Activated CD4-positive, alpha-beta T cell treated with anti-CD3 and anti-CD28 coated beads, Interleukin-2, amount 10 ng/mL, durations not matched to agents 24 days and 14 days (primary cell): ENCODE measurements at regions of chr17 and their contacts with region 1.

Region 1: DNA sequence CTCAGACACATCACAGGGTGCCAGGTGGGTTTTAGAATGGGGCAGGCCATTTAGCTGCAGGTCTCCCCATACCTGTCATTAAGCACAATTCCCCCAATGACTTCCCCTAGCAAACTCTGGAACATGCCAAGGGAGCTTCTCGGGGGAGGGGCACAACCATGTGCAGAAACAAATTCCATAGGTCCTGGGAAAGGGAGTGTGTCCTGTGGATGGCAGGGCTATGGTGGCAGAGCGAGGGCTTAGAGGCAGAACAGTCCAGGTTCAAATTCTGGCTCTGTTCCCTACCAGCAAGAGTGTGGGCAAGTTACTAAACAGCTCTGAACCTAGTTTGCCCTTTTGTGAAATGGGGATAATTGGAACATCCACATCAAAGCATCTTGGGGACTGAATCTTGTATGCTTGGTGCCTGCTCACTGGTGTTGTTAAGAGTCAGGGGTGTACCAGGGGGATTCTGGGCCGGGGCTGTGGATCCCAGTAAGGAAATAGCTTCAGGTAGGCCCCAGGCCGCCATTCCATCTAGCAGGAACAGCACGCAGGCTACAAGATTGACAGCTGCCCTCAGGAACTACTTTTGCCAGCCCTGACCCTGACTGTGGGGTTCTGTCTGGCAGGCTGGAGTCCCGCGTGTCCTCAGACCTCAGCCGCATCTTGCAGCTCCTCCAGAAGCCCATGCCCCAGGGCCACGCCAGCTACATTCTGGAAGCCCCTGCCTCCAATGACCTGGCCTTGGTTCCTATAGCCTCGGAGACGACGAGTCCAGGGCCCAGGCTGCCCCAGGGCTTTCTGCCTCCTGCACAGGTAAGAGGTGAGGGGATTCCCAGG is 5.6 kb upstream of the DCAF7 start:
- DNase-seq: no peak
- H3K4me3 Mint-ChIP-seq: no peak overlapping the region
- H3K27ac Mint-ChIP-seq: no peak overlapping the region
- H3K4me1 Mint-ChIP-seq: peaks cover 3% of the 10 kb centered on the region
- H3K27me3 Mint-ChIP-seq: peaks cover 6% of the 10 kb centered on the region

Region 2: DNA sequence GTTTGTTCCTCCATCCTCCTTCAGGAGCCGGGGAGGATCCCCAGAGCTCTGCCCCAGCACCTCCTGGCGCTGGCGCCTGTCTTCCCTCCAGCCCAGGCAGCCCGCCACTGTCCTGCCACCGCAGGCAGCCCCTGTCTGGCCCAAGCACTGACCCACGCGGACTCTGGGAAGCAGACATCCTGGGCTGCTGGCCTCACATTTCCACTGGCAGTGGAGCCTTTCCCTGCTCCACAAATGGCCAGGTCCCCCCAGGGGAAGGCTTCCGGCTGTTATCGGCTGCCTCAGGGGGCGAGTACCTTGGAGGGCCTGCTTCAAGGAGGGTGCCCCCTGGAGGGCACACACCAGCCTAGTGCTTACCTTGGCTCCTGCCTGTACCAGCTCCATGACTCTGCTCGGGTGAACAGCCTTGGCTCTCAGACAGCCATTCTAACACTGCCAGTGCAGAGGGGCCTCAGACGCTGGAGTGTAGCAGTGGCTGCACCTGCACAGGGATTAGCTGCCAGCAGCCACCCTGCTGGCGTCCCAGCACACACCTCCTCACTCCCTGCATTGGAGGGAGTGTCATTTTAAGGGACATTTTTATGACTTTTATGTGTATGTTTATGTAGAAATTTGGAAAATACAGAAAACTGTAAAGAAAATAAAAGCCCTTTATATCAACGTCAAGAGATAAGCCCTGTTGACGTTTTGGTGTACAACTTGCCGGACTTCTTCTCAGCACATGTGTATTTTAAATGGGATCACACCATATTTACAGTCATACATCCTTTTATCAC is 46.8 kb before region 1 on chr17:
- intact Hi-C with region 1: loop called (anchors 1 kb)
- DNase-seq: no peak
- H3K4me3 Mint-ChIP-seq: no peak overlapping the region
- H3K27ac Mint-ChIP-seq: no peak overlapping the region
- H3K4me1 Mint-ChIP-seq: peaks cover 4% of the 10 kb centered on the region
- H3K27me3 Mint-ChIP-seq: peaks cover 18% of the 10 kb centered on the region

Region 3: GRCh38 chr17:63516910-63517824 is 27.5 kb before region 1 on chr17:
- intact Hi-C with region 1: no loop called
- DNase-seq: no peak
- H3K4me3 Mint-ChIP-seq: no peak overlapping the region
- H3K27ac Mint-ChIP-seq: no peak overlapping the region
- H3K4me1 Mint-ChIP-seq: peaks cover 6% of the 10 kb centered on the region
- H3K27me3 Mint-ChIP-seq: peaks cover 11% of the 10 kb centered on the region

Region 4: DNA sequence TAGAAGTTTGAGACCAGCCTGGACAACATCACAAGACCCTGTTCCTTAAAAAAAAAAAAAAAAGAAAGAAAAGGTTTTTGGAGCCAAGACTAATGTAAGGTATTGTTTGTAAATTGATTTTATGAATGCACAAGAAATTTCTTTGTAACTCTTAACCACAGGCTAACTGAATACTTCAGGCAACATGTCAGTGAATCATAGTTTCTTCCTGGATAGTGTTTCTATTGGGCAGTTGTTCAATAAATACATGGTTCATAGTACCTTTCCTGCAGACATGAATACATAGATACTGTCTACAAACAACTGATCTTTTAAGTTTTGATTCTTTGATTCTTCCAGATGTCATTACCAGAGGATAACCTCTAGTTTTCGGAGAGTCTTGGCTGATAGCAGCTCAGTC is 240.9 kb after region 1 on chr17:
- intact Hi-C with region 1: no loop called
- DNase-seq: no peak
- H3K4me3 Mint-ChIP-seq: no peak overlapping the region
- H3K27ac Mint-ChIP-seq: peak overlapping the region; percentile 20
- H3K4me1 Mint-ChIP-seq: peaks cover 32% of the 10 kb centered on the region
- H3K27me3 Mint-ChIP-seq: no peaks in the 10 kb centered on the region